ENCODE measurements at regions of chr9 and their contacts with region 1.

Region 1: GRCh38 chr9:31251386-31251785 is 1133.1 kb upstream of the ACO1 start:
- DNase-seq: no peak
- ATAC-seq: no peak
- H3K4me3 ChIP-seq: no peak overlapping the region
- H3K27ac ChIP-seq: no peak overlapping the region
- H3K4me1 ChIP-seq: no peaks in the 10 kb centered on the region
- H3K27me3 ChIP-seq: no peaks in the 10 kb centered on the region
- CTCF ChIP-seq: no peak
- POLR2A ChIP-seq: no peak

Region 2: GRCh38 chr9:31272456-31273295 is 21.3 kb after region 1 on chr9:
- intact Hi-C with region 1: loop called in 1 of 10 experiments (anchors 2 kb)
- DNase-seq: no peak
- ATAC-seq: no peak
- H3K4me3 ChIP-seq: no peak overlapping the region
- H3K27ac ChIP-seq: no peak overlapping the region
- H3K4me1 ChIP-seq: no peaks in the 10 kb centered on the region
- H3K27me3 ChIP-seq: no peaks in the 10 kb centered on the region
- CTCF ChIP-seq: no peak
- POLR2A ChIP-seq: no peak

Measured in heart left ventricle (tissue), 16 donors.